HepG2 (cell line): ENCODE measurements at regions of chr14 and their contacts with region 1.

Region 1: GRCh38 chr14:67583711-67584644 is 16.1 kb downstream of the PIGH start:
- DNase-seq: peak; percentile 58
- ATAC-seq: peak; percentile 94
- H3K4me3 ChIP-seq: no peak overlapping the region
- H3K27ac ChIP-seq: no peak overlapping the region
- H3K4me1 ChIP-seq: peaks cover 9% of the 10 kb centered on the region
- H3K27me3 ChIP-seq: no peaks in the 10 kb centered on the region
- CTCF ChIP-seq: peak; percentile 88
- EP300 ChIP-seq: no peak
- POLR2A ChIP-seq: no peak
- RAD21 ChIP-seq: peak; percentile 80

Region 2: GRCh38 chr14:67619446-67620216 is 35.7 kb after region 1 on chr14 and contains the start of gene ARG2:
- CTCF ChIA-PET with region 1: interaction called, 3 read pairs
- POLR2A ChIA-PET with region 1: no interaction called
- in situ Hi-C with region 1: no loop called
- intact Hi-C with region 1: loop called (anchors 1 kb)
- DNase-seq: peak; percentile 95
- ATAC-seq: peak; percentile 94
- H3K4me3 ChIP-seq: peak within 1 kb of the TSS; percentile 81 to 95 (median 88)
- H3K27ac ChIP-seq: peak within 1 kb of the TSS; percentile 61
- H3K4me1 ChIP-seq: peaks cover 51% of the 10 kb centered on the region
- H3K27me3 ChIP-seq: 0 out of 5 replicates have a peak, but pooled peaks cover 0 to 5% of the 10 kb centered on the region in 2 experiments
- CTCF ChIP-seq: peak; percentile 66
- EP300 ChIP-seq: no peak
- POLR2A ChIP-seq: peak; percentile 86 to 89
- RAD21 ChIP-seq: no peak
- total RNA-seq, gene ARG2: 37.5 and 59.7 TPM in 2 replicates

Region 3: GRCh38 chr14:67650694-67651093 is 66.7 kb after region 1 on chr14:
- CTCF ChIA-PET with region 1: no interaction called
- POLR2A ChIA-PET with region 1: no interaction called
- in situ Hi-C with region 1: no loop called
- intact Hi-C with region 1: loop called (anchors 5 kb)
- DNase-seq: no peak
- ATAC-seq: no peak
- H3K4me3 ChIP-seq: no peak overlapping the region
- H3K27ac ChIP-seq: no peak overlapping the region
- H3K4me1 ChIP-seq: no peaks in the 10 kb centered on the region
- H3K27me3 ChIP-seq: no peaks in the 10 kb centered on the region
- CTCF ChIP-seq: no peak
- EP300 ChIP-seq: no peak
- POLR2A ChIP-seq: no peak
- RAD21 ChIP-seq: no peak